ENCODE measurements at regions of chr16 and their contacts with region 1.

Region 1: GRCh38 chr16:89574681-89575246 is 794 bp upstream of the CPNE7 start:
- DNase-seq: peak; percentile 77 to 86
- H3K4me3 ChIP-seq: peak overlapping the region; percentile 29 to 46 (median 30)
- H3K27ac ChIP-seq: no peak overlapping the region
- H3K4me1 ChIP-seq: peaks cover 20 to 31% (median 25%) of the 10 kb centered on the region in 4 donors
- H3K27me3 ChIP-seq: peaks cover 23 to 83% (median 41%) of the 10 kb centered on the region in 3 donors
- CTCF ChIP-seq: peak in 4 of 7 experiments; percentile 42 to 72 (median 64)
- EP300 ChIP-seq: no peak
- POLR2A ChIP-seq: no peak

Region 2: DNA sequence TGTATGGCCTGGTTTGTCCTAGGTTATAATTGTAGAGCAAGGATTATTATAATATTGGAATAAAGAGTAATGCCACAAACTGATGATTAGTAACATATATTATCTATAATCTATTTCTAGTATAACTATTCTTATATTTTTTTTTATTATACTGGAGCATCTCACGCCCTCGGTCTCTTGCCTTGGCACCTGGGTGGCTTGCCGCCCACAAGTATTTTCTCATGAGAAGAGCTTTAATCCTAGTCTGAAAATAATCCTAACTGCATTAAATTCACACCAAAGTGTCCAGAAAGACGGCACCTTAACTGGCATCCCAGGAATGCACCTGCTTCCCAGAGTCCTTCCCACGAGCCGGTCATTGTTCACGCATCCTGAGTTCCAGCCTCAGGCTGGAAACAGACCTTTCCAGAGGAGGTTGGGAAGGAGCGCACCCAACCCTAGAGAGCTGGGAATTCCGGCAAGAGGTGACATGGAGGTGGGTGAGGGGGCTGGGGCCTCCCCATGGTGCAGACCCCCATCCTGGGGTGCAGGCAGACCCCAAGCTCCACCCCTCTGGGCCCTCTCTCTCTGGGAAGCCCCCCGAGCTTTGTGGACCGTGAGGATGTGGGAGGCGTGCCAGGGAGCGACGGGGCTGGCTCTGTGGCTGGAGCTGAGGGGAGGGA is 66.8 kb after region 1 on chr16:
- intact Hi-C with region 1: loop called (anchors 10 kb)
- DNase-seq: no peak
- H3K4me3 ChIP-seq: peak overlapping the region in 2 of 4 donors; percentile 35 to 37
- H3K27ac ChIP-seq: no peak overlapping the region
- H3K4me1 ChIP-seq: peaks cover 8 to 22% (median 18%) of the 10 kb centered on the region in 4 donors
- H3K27me3 ChIP-seq: peaks cover 0 to 10% (median 0%) of the 10 kb centered on the region in 3 donors
- CTCF ChIP-seq: peak in 1 of 7 experiments; percentile 2
- EP300 ChIP-seq: no peak
- POLR2A ChIP-seq: no peak